ENCODE measurements at regions of chr17 and their contacts with region 1.

Region 1: DNA sequence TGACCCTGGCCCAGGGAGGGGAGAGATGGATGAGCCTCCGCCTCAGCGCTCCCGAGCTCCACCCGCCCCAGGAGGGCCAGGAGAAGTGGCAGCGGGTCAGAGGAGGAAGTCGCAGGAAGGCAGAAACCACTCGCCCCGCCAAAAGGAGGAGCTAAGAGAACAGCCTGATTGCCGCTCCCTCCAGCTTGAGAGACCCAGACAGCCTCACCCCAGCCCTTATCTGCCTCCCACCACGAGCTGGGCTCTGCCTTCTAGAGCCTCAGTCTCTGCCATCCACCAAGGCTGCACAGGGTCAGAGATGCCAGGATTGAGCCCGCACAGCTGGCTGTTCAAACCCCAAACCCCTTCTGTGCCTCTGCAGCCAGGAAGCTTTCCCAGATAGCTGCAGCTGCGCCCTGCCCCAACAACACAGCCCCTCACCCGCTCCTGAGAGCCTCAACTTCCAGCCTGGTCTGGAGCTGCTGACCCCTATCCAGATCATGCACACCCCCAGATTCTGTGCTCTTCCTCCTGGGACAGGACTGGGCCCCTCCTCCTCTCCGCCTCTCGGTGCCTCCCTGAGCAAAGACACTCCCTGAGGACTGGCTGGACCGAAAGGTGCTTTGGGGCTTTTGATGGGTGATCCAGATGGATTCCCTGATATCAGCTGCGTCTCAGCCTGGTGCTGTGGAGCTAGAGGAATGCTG is 1.0 kb upstream of the ATP2A3 start:
- DNase-seq: peak; percentile 34 to 76 (median 55)
- ATAC-seq: peak; percentile 44 to 61 (median 52)
- H3K4me3 ChIP-seq: peak overlapping the region; percentile 28 to 72
- H3K4me3 Mint-ChIP-seq: peak overlapping the region; percentile 85 to 87 (median 86)
- H3K27ac ChIP-seq: peak overlapping the region; percentile 79
- H3K27ac Mint-ChIP-seq: peak overlapping the region; percentile 93 to 97
- H3K4me1 ChIP-seq: peaks cover 33 to 51% of the 10 kb centered on the region in 2 experiments
- H3K4me1 Mint-ChIP-seq: peaks cover 41 to 57% (median 44%) of the 10 kb centered on the region in 3 donors
- H3K27me3 ChIP-seq: no peaks in the 10 kb centered on the region
- H3K27me3 Mint-ChIP-seq: no peaks in the 10 kb centered on the region

Region 2: GRCh38 chr17:3870871-3871306 is 94.4 kb before region 1 on chr17:
- CTCF ChIA-PET with region 1: no interaction called
- POLR2A ChIA-PET with region 1: no interaction called
- DNase-seq: peak in 11 of 35 experiments; percentile 6 to 48 (median 18)
- ATAC-seq: peak; percentile 42 to 88 (median 76)
- H3K4me3 ChIP-seq: no peak overlapping the region
- H3K4me3 Mint-ChIP-seq: peak overlapping the region in 1 of 3 donors; percentile 51
- H3K27ac ChIP-seq: peak overlapping the region; percentile 49
- H3K27ac Mint-ChIP-seq: peak overlapping the region; percentile 14 to 98
- H3K4me1 ChIP-seq: peaks cover 0 to 6% of the 10 kb centered on the region in 2 experiments
- H3K4me1 Mint-ChIP-seq: peaks cover 2 to 5% (median 4%) of the 10 kb centered on the region in 3 donors
- H3K27me3 ChIP-seq: no peaks in the 10 kb centered on the region
- H3K27me3 Mint-ChIP-seq: no peaks in the 10 kb centered on the region

Region 3: GRCh38 chr17:3913531-3914311 is 51.5 kb before region 1 on chr17:
- CTCF ChIA-PET with region 1: interaction called, 3 to 12 read pairs
- POLR2A ChIA-PET with region 1: no interaction called
- DNase-seq: peak; percentile 41 to 88 (median 73)
- ATAC-seq: peak; percentile 41 to 80 (median 67)
- H3K4me3 ChIP-seq: no peak overlapping the region
- H3K4me3 Mint-ChIP-seq: peak overlapping the region in 2 of 3 donors; percentile 12 to 17
- H3K27ac ChIP-seq: no peak overlapping the region
- H3K27ac Mint-ChIP-seq: peak overlapping the region; percentile 11 to 76
- H3K4me1 ChIP-seq: peaks cover 24 to 64% of the 10 kb centered on the region in 2 experiments
- H3K4me1 Mint-ChIP-seq: peaks cover 38 to 61% (median 50%) of the 10 kb centered on the region in 3 donors
- H3K27me3 ChIP-seq: peaks cover 0 to 4% of the 10 kb centered on the region in 2 experiments
- H3K27me3 Mint-ChIP-seq: no peaks in the 10 kb centered on the region